ENCODE measurements at regions of chr16 and their contacts with region 1.

Region 1: GRCh38 chr16:11586856-11587642 is at the start of gene LITAF:
- DNase-seq: peak; percentile 51 to 74 (median 65)
- H3K4me3 ChIP-seq: peak within 1 kb of the TSS; percentile 96
- H3K4me3 Mint-ChIP-seq: peak within 1 kb of the TSS; percentile 94 to 99 (median 97)
- H3K27ac ChIP-seq: peak within 1 kb of the TSS; percentile 73
- H3K27ac Mint-ChIP-seq: peak within 1 kb of the TSS; percentile 87 to 99 (median 96)
- H3K4me1 ChIP-seq: peaks cover 37% of the 10 kb centered on the region
- H3K4me1 Mint-ChIP-seq: peaks cover 42 to 52% (median 45%) of the 10 kb centered on the region in 3 donors
- H3K27me3 ChIP-seq: no peaks in the 10 kb centered on the region
- H3K27me3 Mint-ChIP-seq: peaks cover 0 to 2% of the 10 kb centered on the region in 2 donors
- total RNA-seq, gene LITAF: 199 to 201 TPM

Region 2: GRCh38 chr16:11530171-11530940 is 56.7 kb before region 1 on chr16:
- CTCF ChIA-PET with region 1: interaction called, 15 read pairs
- POLR2A ChIA-PET with region 1: no interaction called
- DNase-seq: no peak
- H3K4me3 ChIP-seq: no peak overlapping the region
- H3K4me3 Mint-ChIP-seq: no peak overlapping the region
- H3K27ac ChIP-seq: no peak overlapping the region
- H3K27ac Mint-ChIP-seq: no peak overlapping the region
- H3K4me1 ChIP-seq: no peaks in the 10 kb centered on the region
- H3K4me1 Mint-ChIP-seq: peaks cover 6 to 20% (median 13%) of the 10 kb centered on the region in 3 donors
- H3K27me3 ChIP-seq: no peaks in the 10 kb centered on the region
- H3K27me3 Mint-ChIP-seq: no peaks in the 10 kb centered on the region

Region 3: GRCh38 chr16:11560701-11561449 is 26.2 kb before region 1 on chr16:
- CTCF ChIA-PET with region 1: interaction called, 5 read pairs
- POLR2A ChIA-PET with region 1: interaction called, 12 read pairs
- DNase-seq: peak; percentile 61 to 91 (median 86)
- H3K4me3 ChIP-seq: peak overlapping the region; percentile 62
- H3K4me3 Mint-ChIP-seq: peak overlapping the region; percentile 79 to 98 (median 89)
- H3K27ac ChIP-seq: peak overlapping the region; percentile 83
- H3K27ac Mint-ChIP-seq: peak overlapping the region; percentile 86 to 100 (median 99)
- H3K4me1 ChIP-seq: peaks cover 85% of the 10 kb centered on the region
- H3K4me1 Mint-ChIP-seq: peaks cover 74 to 93% (median 89%) of the 10 kb centered on the region in 3 donors
- H3K27me3 ChIP-seq: no peaks in the 10 kb centered on the region
- H3K27me3 Mint-ChIP-seq: peaks cover 0 to 8% of the 10 kb centered on the region in 2 donors

Region 4: DNA sequence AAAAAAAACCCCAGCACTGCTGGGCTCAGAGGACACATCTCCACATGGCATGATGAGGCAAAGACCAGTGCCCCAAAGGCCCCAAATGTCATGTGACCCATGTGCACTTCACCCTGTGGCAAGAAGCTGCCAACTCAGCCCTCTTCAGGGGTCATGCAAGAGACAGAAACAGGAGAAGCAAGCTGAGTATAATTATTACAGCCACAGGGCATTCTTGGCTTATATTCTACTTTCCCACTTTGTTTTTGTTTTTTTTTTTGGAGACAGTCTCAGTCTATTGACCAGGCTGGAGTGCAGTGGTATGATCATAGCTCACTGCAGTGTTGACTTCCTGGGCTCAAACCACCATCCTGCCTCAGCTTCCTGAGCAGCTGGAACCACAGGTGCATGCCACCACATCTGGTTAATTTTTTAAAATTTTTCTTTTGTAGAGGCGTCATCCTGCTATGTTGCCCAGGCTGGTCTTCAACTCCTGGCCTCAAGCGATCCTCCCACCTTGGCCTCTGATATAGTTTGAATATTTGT is 32.3 kb after region 1 on chr16:
- CTCF ChIA-PET with region 1: interaction called, 8 read pairs
- POLR2A ChIA-PET with region 1: interaction called, 14 read pairs
- DNase-seq: peak in 4 of 5 donors; percentile 13 to 68 (median 58)
- H3K4me3 ChIP-seq: peak overlapping the region; percentile 5
- H3K4me3 Mint-ChIP-seq: peak overlapping the region; percentile 1 to 79 (median 74)
- H3K27ac ChIP-seq: peak overlapping the region; percentile 6
- H3K27ac Mint-ChIP-seq: peak overlapping the region; percentile 91 to 98 (median 96)
- H3K4me1 ChIP-seq: peaks cover 80% of the 10 kb centered on the region
- H3K4me1 Mint-ChIP-seq: peaks cover 52 to 75% (median 58%) of the 10 kb centered on the region in 3 donors
- H3K27me3 ChIP-seq: no peaks in the 10 kb centered on the region
- H3K27me3 Mint-ChIP-seq: no peaks in the 10 kb centered on the region

Region 5: GRCh38 chr16:11639925-11640899 is 53.2 kb after region 1 on chr16:
- CTCF ChIA-PET with region 1: interaction called, 16 read pairs
- POLR2A ChIA-PET with region 1: no interaction called
- DNase-seq: no peak
- H3K4me3 ChIP-seq: no peak overlapping the region
- H3K4me3 Mint-ChIP-seq: peak overlapping the region in 1 of 7 donors; percentile 26
- H3K27ac ChIP-seq: no peak overlapping the region
- H3K27ac Mint-ChIP-seq: peak overlapping the region in 5 of 8 donors; percentile 23 to 80 (median 43)
- H3K4me1 ChIP-seq: peaks cover 16% of the 10 kb centered on the region
- H3K4me1 Mint-ChIP-seq: peaks cover 17 to 21% (median 20%) of the 10 kb centered on the region in 3 donors
- H3K27me3 ChIP-seq: no peaks in the 10 kb centered on the region
- H3K27me3 Mint-ChIP-seq: peaks cover 0 to 5% of the 10 kb centered on the region in 2 donors

Measured in CD8-positive, alpha-beta memory T cell (primary cell).